ENCODE measurements at regions of chr17 and their contacts with region 1.

Region 1: DNA sequence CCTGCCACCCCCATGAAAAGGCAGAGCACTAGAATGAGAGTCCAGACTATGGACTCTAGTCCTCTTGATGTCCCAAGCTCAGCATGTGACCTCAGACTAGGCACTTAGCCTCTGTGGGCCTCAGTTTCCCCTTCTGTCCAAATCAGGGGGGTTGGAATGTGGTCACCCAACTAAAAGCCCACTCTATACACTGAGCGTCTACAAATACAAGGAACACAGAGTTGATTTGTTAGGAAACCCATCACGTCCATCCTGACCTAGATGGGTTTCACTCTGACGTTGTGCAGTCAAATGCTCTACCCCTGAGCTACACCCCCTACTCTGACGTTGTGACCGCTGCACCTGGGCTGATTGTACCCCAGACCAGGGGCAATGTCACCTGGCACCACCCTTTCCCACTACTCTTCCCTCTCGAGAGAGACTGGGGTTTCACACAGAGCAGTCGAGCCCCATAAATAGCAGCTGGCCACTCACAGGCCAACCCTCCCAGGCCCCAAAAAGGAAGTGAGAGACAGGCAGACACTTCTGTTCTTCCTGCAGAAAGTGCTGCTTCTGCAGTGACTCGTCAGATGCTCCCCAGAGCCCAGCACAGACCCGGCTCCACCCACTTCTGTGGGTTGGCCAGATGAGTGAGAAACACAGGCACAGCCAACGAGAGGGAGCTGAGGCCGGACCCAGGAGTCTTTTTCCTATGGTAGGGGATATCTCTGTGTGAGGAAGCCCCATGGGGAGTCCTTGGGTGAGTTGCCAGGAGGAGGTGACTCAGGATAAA is 16.1 kb upstream of the TNFRSF13B start:
- DNase-seq: peak; percentile 69
- H3K4me3 Mint-ChIP-seq: peak overlapping the region; percentile 49
- H3K27ac Mint-ChIP-seq: peak overlapping the region; percentile 91
- H3K4me1 Mint-ChIP-seq: peaks cover 31% of the 10 kb centered on the region
- H3K27me3 Mint-ChIP-seq: no peaks in the 10 kb centered on the region

Region 2: DNA sequence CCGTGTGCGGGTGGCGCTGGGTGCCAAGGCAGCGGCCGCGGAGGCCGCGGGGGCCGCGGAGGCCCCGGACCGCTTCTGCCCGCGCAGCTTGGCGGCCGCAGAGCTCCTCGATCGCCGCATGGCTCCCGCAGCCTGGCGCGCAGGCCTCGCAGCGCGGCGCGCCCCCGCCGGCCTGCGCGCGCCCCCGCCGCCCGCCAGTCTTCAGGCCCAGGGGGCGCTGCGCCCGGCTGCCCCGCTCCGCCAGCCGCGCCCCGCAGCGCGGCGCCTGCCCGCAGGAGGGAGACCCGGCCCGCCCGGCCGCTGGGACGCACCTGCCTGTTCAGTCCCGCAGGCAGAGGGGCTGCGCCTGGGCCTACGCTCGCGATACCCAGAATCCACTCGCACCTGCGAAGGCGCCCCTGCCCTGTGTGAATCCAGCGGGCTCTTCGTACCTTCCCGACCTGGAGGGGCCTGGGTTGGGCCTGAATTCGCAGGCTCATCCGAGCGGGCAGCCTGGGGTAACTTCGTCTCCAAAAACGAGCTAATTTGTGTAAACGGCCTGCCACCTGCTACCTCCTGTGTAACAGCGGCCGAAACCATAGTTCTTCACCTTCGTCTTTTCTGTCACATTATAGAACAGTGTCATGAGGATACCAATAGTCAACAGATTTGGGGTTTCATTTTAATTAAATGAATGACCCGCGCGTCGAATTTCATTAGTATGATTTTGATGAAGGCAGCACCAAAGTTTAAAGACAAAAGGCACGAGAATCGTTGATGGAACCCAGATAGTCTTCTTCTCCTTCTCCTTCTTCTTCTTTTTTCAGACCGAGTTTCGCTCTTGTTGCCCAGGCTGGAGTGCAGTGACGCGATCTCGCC is 634.5 kb before region 1 on chr17 and contains the start of gene CENPV:
- intact Hi-C with region 1: no loop called
- DNase-seq: peak; percentile 49
- H3K4me3 Mint-ChIP-seq: peak within 1 kb of the TSS; percentile 95
- H3K27ac Mint-ChIP-seq: peak within 1 kb of the TSS; percentile 77
- H3K4me1 Mint-ChIP-seq: peaks cover 16% of the 10 kb centered on the region
- H3K27me3 Mint-ChIP-seq: peaks cover 22% of the 10 kb centered on the region
- total RNA-seq, gene CENPV: 47.1 and 54.7 TPM in 2 replicates

Region 3: DNA sequence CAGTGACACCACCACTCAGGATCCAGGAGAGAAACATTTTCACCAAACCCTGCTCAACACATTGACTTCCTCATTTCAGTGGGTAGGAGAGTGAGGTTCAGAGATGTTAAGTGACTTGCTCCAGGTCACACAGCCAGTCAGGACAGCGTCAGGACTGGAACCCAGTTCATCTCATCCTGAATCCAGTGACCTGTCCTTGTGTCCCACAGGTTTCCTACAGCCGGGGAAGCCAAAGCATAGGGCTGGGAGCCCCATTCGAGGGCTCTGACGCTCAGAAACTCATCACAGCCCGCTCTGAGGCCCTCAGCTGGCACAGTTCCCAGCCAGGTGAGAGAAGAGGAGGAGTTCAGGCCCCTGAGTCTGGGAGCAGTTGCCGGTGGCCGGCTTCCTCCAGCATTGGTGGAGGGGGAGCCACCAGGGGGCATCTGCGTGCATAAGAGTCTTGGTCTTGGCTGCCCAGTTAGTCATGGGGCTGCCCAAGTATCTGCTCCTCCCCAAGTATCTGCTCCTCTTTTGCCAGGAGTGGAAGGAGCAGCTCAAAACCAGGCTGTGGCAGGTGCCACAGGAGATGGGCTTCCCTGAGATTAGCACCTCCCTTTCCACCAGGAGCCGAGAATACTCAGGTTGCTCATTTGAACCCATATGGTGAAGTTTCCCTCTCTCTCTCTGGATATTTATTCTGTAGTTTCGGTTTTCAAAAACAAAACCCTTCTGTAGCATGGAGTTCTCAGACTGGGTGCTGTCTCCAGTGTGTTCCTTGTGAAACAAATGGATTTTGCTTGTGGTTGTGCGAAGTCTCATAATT is 72.1 kb before region 1 on chr17:
- intact Hi-C with region 1: loop called (anchors 1 kb)
- DNase-seq: no peak
- H3K4me3 Mint-ChIP-seq: no peak overlapping the region
- H3K27ac Mint-ChIP-seq: no peak overlapping the region
- H3K4me1 Mint-ChIP-seq: no peaks in the 10 kb centered on the region
- H3K27me3 Mint-ChIP-seq: peaks cover 14% of the 10 kb centered on the region

Region 4: DNA sequence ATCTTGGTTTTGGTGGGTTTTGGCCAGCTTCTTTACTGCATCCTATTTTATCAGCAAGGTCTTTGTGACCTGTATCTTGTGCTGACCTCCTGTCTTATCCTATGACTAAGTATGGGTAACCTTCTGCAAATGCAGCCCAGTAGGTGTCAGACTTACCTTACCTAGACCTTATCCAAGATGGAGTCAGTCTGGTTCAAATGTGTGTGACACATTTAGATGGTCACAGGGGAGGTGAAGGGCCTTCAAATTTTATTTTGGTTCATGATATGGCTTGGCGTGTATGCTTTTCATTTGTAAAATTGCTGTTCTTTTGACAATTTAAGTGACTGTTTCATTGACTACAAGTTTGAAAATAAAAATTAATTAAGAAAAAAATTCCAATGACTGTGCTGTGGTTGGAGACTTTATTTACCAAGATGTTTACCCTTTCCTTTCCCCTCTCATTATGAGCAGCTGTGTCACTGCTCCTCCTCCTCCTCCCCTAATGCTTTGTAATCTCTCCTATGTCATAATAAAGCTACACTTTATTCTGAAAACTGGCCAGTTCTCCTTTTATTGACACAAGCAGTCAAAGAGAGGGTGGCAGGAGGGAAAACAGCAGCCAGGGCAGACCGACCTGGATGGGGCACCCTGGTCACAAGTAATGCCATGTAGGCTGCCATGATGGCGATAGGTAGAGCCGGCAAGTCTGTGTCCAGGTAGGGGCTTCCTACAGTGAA is 65.5 kb before region 1 on chr17:
- intact Hi-C with region 1: loop called (anchors 1 kb)
- DNase-seq: no peak
- H3K4me3 Mint-ChIP-seq: no peak overlapping the region
- H3K27ac Mint-ChIP-seq: no peak overlapping the region
- H3K4me1 Mint-ChIP-seq: no peaks in the 10 kb centered on the region
- H3K27me3 Mint-ChIP-seq: peaks cover 7% of the 10 kb centered on the region

Measured in activated T-helper 1 cell treated with anti-CD3 and anti-CD28 coated beads, Interleukin-12 subunit alpha, Interleukin-12 subunit beta, Interleukin-2, Interleukin-4 antibody, amounts not matched to agents 30 ng/mL and 10 ng/mL and 1 ng/mL, durations not matched to agents 14 hours and 24 hours and 36 hours (primary cell).